Activated T-helper 1 cell treated with anti-CD3 and anti-CD28 coated beads, Interleukin-12 subunit alpha, Interleukin-12 subunit beta, Interleukin-2, Interleukin-4 antibody, amounts not matched to agents 30 ng/mL and 10 ng/mL and 1 ng/mL, durations not matched to agents 14 hours and 24 hours and 36 hours (primary cell): ENCODE measurements at regions of chr1 and their contacts with region 1.

Region 1: GRCh38 chr1:246329900-246330299 is 177.2 kb downstream of the SMYD3 start:
- DNase-seq: peak; percentile 41
- H3K4me3 Mint-ChIP-seq: peak overlapping the region; percentile 53
- H3K27ac Mint-ChIP-seq: peak overlapping the region; percentile 65
- H3K4me1 Mint-ChIP-seq: peaks cover 50% of the 10 kb centered on the region
- H3K27me3 Mint-ChIP-seq: no peaks in the 10 kb centered on the region

Region 2: DNA sequence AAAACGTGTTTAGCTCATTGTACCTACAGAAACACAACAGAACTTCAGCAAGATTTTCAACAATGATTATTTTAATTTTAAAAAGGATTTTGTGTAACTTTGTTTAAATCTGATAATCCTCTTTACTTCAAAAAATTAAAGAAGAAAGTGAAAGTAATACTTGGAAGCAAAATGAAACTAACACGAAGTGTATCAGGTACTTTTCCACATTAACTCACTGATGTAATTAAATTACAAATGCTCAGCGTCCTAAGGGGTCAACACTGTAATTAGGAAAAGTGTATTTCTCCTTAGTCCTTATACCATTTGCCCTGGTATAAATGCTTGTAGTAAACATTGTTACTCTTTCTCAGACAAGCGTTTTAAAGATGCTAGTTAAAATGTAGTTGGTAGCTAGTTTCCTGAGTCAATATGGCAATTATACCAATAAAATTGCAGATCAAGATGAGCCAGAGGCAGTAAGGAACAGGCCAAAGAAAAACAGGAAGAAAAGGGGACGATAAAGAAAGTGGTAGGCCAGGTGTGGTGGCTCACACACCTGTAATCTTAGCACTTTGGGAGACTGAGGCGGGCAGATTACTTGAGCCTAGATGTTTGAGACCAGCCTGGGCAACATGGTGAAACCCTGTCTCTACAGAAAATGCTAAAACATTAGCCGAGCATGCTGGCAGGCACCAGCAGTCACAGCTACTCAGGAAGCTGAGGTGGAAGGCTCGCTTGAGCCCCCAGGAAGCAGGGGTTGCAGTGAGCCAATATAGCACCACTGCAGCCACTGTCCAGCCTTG is 375.8 kb before region 1 on chr1:
- intact Hi-C with region 1: loop called (anchors 5 kb)
- DNase-seq: no peak
- H3K4me3 Mint-ChIP-seq: peak overlapping the region; percentile 75
- H3K27ac Mint-ChIP-seq: peak overlapping the region; percentile 88
- H3K4me1 Mint-ChIP-seq: peaks cover 26% of the 10 kb centered on the region
- H3K27me3 Mint-ChIP-seq: no peaks in the 10 kb centered on the region

Region 3: GRCh38 chr1:246270236-246270635 is 59.7 kb before region 1 on chr1:
- intact Hi-C with region 1: no loop called
- DNase-seq: no peak
- H3K4me3 Mint-ChIP-seq: no peak overlapping the region
- H3K27ac Mint-ChIP-seq: no peak overlapping the region
- H3K4me1 Mint-ChIP-seq: no peaks in the 10 kb centered on the region
- H3K27me3 Mint-ChIP-seq: no peaks in the 10 kb centered on the region

Region 4: DNA sequence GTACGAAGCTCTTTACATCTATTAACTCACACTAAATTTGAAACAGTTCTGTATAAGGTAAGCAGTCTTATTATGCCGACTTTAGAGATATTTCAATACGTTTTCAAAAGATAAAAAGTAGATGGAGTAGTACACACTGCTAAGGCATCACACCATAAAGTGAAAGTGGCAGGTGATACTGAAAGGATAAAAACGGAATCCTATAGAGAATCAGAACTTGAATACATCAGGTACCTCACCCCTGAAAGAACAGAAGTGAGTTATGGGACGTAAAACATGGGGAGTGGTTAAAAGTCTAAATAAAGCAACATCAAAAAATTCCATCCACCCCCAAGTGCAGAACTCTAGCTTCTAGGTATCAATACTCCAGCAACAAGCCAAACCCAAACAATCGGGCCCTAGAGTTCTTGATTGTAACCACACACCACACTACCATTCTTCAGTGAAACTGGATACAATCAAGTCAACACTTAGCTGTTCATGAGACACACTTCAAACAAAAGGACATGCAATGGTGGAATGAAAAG is 34.6 kb after region 1 on chr1:
- intact Hi-C with region 1: loop called (anchors 1 kb)
- DNase-seq: no peak
- H3K4me3 Mint-ChIP-seq: no peak overlapping the region
- H3K27ac Mint-ChIP-seq: no peak overlapping the region
- H3K4me1 Mint-ChIP-seq: peaks cover 11% of the 10 kb centered on the region
- H3K27me3 Mint-ChIP-seq: no peaks in the 10 kb centered on the region

Region 5: GRCh38 chr1:246476771-246477170 is 146.9 kb after region 1 on chr1:
- intact Hi-C with region 1: loop called (anchors 2 kb)
- DNase-seq: no peak
- H3K4me3 Mint-ChIP-seq: no peak overlapping the region
- H3K27ac Mint-ChIP-seq: no peak overlapping the region
- H3K4me1 Mint-ChIP-seq: peaks cover 20% of the 10 kb centered on the region
- H3K27me3 Mint-ChIP-seq: no peaks in the 10 kb centered on the region

Region 6: DNA sequence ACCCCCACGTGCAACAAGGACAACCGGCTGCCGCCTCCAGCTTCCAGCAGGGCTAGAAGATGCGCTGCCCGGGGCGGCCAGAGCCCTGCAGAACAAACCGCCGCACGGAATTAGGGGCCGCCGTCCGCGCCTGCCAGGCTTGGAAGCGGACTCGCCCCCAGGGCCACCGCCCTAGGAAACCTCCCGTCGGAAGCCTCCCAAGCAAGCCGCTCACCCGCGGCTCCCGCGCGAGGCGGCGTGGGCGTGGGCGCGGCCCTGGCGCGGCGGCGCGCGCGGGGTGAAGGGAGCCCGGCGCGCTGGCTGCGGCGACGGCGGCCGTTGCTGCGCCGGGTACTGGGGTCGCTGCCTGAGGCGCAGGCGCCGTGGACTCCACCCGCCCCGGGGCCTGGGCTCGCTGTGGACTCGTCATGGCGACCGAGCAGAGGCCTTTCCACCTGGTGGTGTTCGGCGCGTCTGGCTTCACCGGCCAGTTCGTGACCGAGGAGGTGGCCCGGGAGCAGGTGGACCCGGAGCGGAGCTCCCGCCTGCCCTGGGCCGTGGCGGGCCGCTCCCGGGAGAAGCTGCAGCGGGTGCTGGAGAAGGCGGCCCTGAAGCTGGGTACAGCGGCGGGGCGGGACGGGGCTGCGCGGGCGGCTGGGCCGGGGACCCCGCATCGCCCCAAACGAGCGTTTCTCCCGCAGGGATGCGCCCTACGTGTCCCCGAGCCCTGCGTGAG is 394.3 kb after region 1 on chr1 and contains the start of gene SCCPDH:
- intact Hi-C with region 1: loop called (anchors 10 kb)
- DNase-seq: peak; percentile 55
- H3K4me3 Mint-ChIP-seq: peak within 1 kb of the TSS; percentile 92
- H3K27ac Mint-ChIP-seq: peak within 1 kb of the TSS; percentile 78
- H3K4me1 Mint-ChIP-seq: peaks cover 10% of the 10 kb centered on the region
- H3K27me3 Mint-ChIP-seq: peaks cover 6% of the 10 kb centered on the region
- total RNA-seq, gene SCCPDH: 23.5 and 24.3 TPM in 2 replicates

Region 7: DNA sequence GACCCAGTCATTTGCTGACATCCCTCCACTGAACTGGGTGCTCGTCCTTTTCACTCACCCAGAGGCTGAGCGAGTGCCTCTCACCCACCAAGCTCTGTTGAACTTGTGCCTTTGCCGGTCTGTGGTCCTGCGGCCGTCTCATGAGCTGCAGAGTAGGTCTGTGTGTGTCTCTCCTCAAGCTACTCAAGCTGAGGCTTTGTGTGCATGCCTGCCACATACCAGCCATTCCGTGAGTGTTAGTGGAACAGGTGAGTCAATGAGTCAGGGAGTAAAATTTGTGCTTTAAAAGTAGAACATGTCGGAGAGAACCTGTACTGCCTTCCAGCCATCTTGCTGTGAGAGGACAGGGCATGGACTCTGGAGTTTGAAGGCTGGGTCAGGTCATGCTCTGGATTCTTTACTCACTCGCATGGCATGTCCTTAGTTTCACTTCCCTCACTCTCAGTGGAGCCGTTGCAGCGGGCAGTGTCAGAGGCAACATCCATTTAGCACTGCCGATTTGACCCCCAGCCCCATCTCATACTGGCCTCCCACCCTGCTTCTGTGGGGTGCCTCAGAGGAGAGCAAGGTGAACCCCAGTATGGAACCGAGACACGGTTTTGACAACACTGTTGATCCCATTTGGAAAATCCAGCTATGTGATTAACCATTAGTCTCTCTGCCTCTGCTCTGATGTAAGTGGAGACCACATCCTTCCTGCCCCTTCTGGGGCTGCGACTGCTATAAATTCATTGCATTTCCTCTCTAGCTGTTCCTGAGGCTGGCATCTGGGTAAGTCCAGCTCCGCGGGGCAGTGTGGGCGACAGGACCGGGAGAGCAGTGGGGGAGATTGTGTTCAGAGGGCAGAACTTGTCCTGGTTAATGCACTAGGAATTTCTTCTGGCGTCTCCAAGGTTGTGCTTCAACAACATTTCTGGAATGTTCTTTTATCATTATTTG is 1085.8 kb after region 1 on chr1 and contains the start of gene NLRP3:
- intact Hi-C with region 1: loop called (anchors 10 kb)
- DNase-seq: peak; percentile 8
- H3K4me3 Mint-ChIP-seq: peak within 1 kb of the TSS; percentile 63
- H3K27ac Mint-ChIP-seq: no peak within 1 kb of the TSS
- H3K4me1 Mint-ChIP-seq: peaks cover 28% of the 10 kb centered on the region
- H3K27me3 Mint-ChIP-seq: peaks cover 27% of the 10 kb centered on the region
- total RNA-seq, gene NLRP3: 0.12 TPM in 1 of 2 replicates, not detected in the other